GM12878 (cell line): ENCODE measurements at regions of chr4 and their contacts with region 1.

Region 1: GRCh38 chr4:68864438-68865187 is 48.8 kb downstream of the UGT2B10 start:
- DNase-seq: no peak
- ATAC-seq: no peak; the same call in 2 of the 3 replicates
- H3K4me3 ChIP-seq: no peak overlapping the region
- H3K27ac ChIP-seq: no peak overlapping the region
- H3K4me1 ChIP-seq: no peaks in the 10 kb centered on the region
- H3K27me3 ChIP-seq: no peaks in the 10 kb centered on the region
- CTCF ChIP-seq: no peak
- EP300 ChIP-seq: no peak
- POLR2A ChIP-seq: no peak
- RAD21 ChIP-seq: no peak

Region 2: GRCh38 chr4:68617003-68617698 is 247.5 kb before region 1 on chr4:
- CTCF ChIA-PET with region 1: no interaction called
- POLR2A ChIA-PET with region 1: no interaction called
- RAD21 ChIA-PET with region 1: no interaction called
- SMC1A ChIA-PET with region 1: no interaction called
- in situ Hi-C with region 1: no loop called
- intact Hi-C with region 1: loop called (anchors 10 kb)
- DNase-seq: no peak
- ATAC-seq: no peak
- H3K4me3 ChIP-seq: no peak overlapping the region
- H3K27ac ChIP-seq: no peak overlapping the region
- H3K4me1 ChIP-seq: no peaks in the 10 kb centered on the region
- H3K27me3 ChIP-seq: no peaks in the 10 kb centered on the region
- CTCF ChIP-seq: no peak
- EP300 ChIP-seq: no peak
- POLR2A ChIP-seq: no peak
- RAD21 ChIP-seq: no peak

Region 3: DNA sequence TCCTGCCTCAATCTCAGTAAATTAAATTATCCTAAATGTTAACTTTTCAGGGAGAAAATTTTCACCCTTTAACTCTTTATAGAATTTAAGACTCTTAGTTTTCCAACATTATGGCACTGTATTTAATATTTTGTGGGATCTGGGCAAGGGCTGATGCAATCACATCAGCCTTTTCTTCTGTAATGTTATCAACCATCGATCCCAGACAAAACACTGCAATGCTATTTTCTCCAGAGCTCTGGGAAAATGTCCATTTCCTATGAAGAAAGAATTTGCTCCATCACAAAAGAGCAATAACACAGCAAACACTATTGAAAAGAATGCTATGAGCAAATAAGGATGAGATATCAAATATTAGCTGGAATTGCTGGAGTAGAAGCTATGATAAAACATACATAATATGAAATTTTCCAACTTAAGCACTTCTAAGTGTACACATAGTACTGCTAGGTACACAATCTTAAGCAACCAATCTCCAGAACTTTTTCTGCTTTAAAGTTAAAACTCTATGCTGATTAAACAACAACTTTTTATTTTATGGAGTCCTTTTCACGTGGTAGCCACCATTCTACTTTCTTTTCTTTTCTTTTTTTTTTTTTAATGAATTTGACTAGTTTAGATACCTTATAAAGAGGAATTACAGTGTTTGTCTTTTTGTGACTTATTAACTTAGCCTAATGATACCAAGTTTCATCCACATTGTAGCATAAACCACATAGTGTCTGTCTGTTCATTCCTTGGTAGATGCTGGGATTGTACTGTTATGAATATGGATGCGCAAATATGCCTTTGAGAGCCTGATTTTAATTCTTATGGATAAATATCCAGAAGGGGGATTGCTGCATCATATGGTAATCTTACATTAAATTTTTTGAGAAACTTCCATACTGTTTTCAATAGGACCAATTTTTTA is 43.4 kb after region 1 on chr4:
- CTCF ChIA-PET with region 1: no interaction called
- POLR2A ChIA-PET with region 1: no interaction called
- RAD21 ChIA-PET with region 1: no interaction called
- SMC1A ChIA-PET with region 1: no interaction called
- in situ Hi-C with region 1: no loop called
- intact Hi-C with region 1: no loop called
- DNase-seq: no peak
- ATAC-seq: no peak
- H3K4me3 ChIP-seq: no peak overlapping the region
- H3K27ac ChIP-seq: no peak overlapping the region
- H3K4me1 ChIP-seq: no peaks in the 10 kb centered on the region
- H3K27me3 ChIP-seq: no peaks in the 10 kb centered on the region
- CTCF ChIP-seq: no peak
- EP300 ChIP-seq: no peak
- POLR2A ChIP-seq: no peak
- RAD21 ChIP-seq: no peak

Region 4: DNA sequence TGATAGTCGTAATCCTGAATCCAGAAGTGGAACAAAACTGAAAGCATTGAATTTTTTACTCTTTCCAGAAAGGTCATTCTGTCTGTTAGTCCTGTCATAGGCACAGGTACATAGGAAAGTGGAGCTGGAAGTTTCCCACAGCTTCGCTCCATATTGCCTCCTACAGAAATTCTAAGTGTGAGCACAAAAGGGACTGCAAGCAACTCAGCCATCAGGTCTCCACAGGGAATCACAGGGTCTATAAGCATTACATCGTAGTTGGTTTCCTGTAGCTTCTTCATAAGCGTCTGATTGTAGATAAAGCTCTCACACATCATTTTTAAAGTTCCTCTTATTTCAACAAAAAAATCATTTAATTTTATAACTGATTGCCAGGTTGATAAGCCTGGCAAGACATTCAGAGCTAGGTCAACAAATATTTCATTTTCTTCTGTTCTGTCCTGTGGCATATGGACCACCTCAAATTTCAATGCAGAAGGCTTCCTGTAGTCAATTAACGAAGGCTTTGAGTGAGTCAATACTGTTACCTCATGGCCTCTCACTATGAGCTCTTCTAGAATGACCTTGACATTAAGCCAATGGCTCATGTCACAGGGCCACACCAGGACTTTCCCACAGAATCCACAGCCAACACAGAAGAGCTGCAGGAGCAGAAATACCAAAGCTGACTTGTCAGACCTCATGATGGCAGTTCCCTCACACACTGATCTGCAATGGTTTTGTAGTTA is 86.6 kb after region 1 on chr4 and contains the start of gene UGT2A3:
- CTCF ChIA-PET with region 1: no interaction called
- POLR2A ChIA-PET with region 1: no interaction called
- RAD21 ChIA-PET with region 1: no interaction called
- SMC1A ChIA-PET with region 1: no interaction called
- in situ Hi-C with region 1: no loop called
- intact Hi-C with region 1: no loop called
- DNase-seq: peak; percentile 23
- ATAC-seq: peak; percentile 79
- H3K4me3 ChIP-seq: no peak within 1 kb of the TSS
- H3K27ac ChIP-seq: no peak within 1 kb of the TSS
- H3K4me1 ChIP-seq: no peaks in the 10 kb centered on the region
- H3K27me3 ChIP-seq: no peaks in the 10 kb centered on the region
- CTCF ChIP-seq: no peak
- EP300 ChIP-seq: no peak
- POLR2A ChIP-seq: no peak
- RAD21 ChIP-seq: no peak
- polyA plus RNA-seq, gene UGT2A3: 0.05 to 0.18 TPM